A549 (cell line): ENCODE measurements at regions of chr3 and their contacts with region 1.

Region 1: DNA sequence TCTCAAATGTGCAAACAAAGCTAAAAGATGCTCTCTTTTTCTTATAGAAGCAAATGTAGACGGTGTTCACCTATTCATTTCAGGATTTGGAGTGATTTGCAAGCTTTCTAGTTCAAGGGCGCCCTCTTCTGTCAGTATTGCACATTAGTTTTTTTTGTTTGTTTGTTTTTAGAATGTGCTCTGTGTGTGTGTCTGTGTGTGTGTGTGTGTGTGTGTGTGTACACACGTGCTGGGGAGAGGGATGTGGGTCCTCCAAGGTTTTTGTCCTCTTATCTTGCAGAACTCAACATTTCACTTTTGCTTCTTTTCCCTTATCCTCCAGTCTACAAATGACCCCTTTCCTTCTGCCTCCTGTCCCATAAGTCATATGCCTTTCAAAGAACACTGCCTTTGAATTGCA is 23.5 kb downstream of the DNAH1 start:
- DNase-seq: peak; percentile 42 to 81
- ATAC-seq: peak; percentile 43 to 54; a peak in 3 of 6 replicates
- H3K4me3 ChIP-seq: no peak overlapping the region
- H3K27ac ChIP-seq: no peak overlapping the region
- H3K4me1 ChIP-seq: no peaks in the 10 kb centered on the region
- CTCF ChIP-seq: peak; percentile 81
- EP300 ChIP-seq: no peak
- POLR2A ChIP-seq: no peak
- RAD21 ChIP-seq: peak; percentile 87 to 89

Region 2: GRCh38 chr3:52144034-52144795 is 195.4 kb before region 1 on chr3:
- CTCF ChIA-PET with region 1: no interaction called
- POLR2A ChIA-PET with region 1: no interaction called
- DNase-seq: peak; percentile 69 to 84
- ATAC-seq: peak; percentile 92 to 96
- H3K4me3 ChIP-seq: no peak overlapping the region
- H3K27ac ChIP-seq: no peak overlapping the region
- H3K4me1 ChIP-seq: no peaks in the 10 kb centered on the region
- CTCF ChIP-seq: peak; percentile 71
- EP300 ChIP-seq: no peak
- POLR2A ChIP-seq: no peak
- RAD21 ChIP-seq: peak; percentile 79 to 80

Region 3: GRCh38 chr3:52220380-52221026 is 119.1 kb before region 1 on chr3:
- CTCF ChIA-PET with region 1: interaction called, 50 read pairs
- POLR2A ChIA-PET with region 1: no interaction called
- DNase-seq: peak; percentile 62 to 76
- ATAC-seq: peak; percentile 80 to 92
- H3K4me3 ChIP-seq: no peak overlapping the region
- H3K27ac ChIP-seq: no peak overlapping the region
- H3K4me1 ChIP-seq: peaks cover 8% of the 10 kb centered on the region; the same call in 2 of the 3 replicates
- CTCF ChIP-seq: peak; percentile 76
- EP300 ChIP-seq: no peak
- POLR2A ChIP-seq: no peak
- RAD21 ChIP-seq: peak; percentile 52 to 69; a peak in 4 of 5 replicates

Region 4: DNA sequence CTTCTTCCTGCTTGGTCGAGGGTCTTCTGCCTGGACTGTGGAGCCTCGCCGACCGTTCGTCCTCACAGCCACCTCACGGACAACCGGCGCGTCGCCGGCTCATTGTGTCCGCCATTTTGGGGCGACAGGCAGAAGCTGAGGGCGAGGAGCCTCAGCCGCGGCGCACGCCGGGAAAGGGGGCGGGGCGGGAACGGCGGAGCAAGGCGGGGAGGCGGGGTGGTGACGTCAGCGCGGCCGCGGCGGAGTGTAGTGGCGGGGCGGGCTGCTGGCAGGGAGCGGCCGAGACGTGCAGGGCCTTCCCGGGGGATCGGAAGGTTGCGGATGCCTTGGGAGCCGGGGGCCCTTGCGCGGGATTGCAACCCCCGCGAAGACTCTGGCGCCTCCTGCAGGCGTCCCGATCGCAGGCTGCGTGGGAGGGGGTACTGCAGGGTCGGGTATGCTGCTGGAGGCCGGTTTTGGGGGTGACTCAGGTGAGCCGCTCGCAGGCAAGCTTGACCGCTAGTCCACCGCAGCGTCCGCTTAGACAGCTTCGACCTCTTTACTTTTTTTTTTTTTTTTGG is 61.0 kb before region 1 on chr3 and contains the start of gene WDR82:
- CTCF ChIA-PET with region 1: interaction called, 20 read pairs
- POLR2A ChIA-PET with region 1: interaction called, 4 read pairs
- DNase-seq: peak; percentile 70 to 91
- ATAC-seq: peak; percentile 91 to 92
- H3K4me3 ChIP-seq: peak within 1 kb of the TSS; percentile 73
- H3K27ac ChIP-seq: peak within 1 kb of the TSS; percentile 98
- H3K4me1 ChIP-seq: peaks cover 45% of the 10 kb centered on the region
- CTCF ChIP-seq: no peak
- EP300 ChIP-seq: no peak
- POLR2A ChIP-seq: peak; percentile 88
- RAD21 ChIP-seq: no peak
- polyA plus RNA-seq, gene WDR82: 52.7 and 58.5 TPM in 2 replicates

Region 5: DNA sequence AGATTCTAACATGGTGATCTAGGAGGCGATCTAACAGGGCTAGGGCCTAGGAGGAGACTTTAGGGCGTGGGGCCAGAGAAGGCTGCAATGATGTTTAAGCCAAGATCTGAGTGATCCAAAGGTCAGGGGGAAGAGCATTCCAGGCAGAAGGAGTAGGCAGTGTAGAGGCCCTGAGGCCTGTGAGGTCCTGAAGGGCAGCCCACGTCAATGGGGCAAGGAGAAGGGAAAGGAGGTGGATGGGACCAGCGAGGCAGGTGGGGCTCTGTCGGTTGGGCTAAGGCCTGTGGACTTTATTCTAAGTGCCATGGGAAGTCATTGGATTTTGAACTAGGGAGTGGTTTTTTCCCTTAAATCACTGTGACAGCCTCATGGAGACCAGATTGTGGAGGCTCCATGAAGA is 33.7 kb before region 1 on chr3:
- CTCF ChIA-PET with region 1: interaction called, 311 read pairs
- POLR2A ChIA-PET with region 1: no interaction called
- DNase-seq: no peak
- ATAC-seq: no peak
- H3K4me3 ChIP-seq: no peak overlapping the region
- H3K27ac ChIP-seq: no peak overlapping the region
- H3K4me1 ChIP-seq: no peaks in the 10 kb centered on the region
- CTCF ChIP-seq: no peak
- EP300 ChIP-seq: no peak
- POLR2A ChIP-seq: no peak
- RAD21 ChIP-seq: no peak

Region 6: DNA sequence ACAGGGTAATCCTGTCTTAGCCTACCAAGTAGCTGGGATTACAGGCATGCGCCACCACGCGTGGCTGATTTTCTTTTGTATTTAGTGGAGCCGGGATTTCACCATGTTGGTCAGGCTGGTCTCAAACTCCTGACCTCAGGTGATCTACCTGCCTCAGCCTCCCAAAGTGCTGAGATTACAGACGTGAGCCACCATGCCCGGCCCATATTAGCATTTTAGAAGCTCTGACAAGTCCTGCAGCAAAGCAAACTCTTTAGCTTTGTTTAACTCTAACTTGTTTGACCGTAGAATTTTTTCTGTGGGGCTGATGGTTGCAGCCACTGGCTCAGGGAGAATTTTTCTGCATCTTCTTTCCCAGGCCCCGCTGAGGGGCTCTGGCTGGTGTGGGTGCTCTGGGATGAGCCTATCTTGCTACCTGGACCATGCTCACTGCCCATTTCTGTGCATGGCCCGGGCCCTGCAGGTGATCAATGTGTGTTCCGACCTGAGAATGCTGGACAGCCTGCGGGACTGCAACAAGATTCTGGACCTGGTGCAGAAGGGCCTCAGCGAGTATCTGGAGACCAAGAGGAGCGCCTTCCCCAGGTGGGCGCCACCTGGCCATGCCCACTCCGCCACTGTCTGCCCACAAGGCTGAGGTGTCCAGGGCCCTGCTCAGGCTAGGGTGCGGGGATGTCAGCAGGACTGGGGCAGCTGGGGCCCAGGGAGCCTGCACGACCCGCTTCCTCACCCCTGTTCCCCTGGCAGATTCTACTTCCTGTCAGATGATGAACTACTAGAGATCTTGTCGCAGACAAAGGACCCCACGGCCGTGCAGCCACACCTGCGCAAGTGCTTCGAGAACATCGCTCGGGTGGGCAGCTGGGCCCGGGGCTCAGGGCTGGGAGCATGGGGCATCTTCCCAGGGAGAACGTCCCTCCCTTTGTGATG is 17.8 kb after region 1 on chr3:
- CTCF ChIA-PET with region 1: interaction called, 46 read pairs
- POLR2A ChIA-PET with region 1: no interaction called
- DNase-seq: no peak
- ATAC-seq: no peak
- H3K4me3 ChIP-seq: no peak overlapping the region
- H3K27ac ChIP-seq: no peak overlapping the region
- H3K4me1 ChIP-seq: no peaks in the 10 kb centered on the region
- CTCF ChIP-seq: no peak
- EP300 ChIP-seq: no peak
- POLR2A ChIP-seq: no peak
- RAD21 ChIP-seq: no peak

Region 7: GRCh38 chr3:52444860-52445793 is 105.5 kb after region 1 on chr3 and contains the start of gene SEMA3G:
- CTCF ChIA-PET with region 1: interaction called, 11 read pairs
- POLR2A ChIA-PET with region 1: no interaction called
- DNase-seq: peak; percentile 50 to 72
- ATAC-seq: peak; percentile 79 to 93
- H3K4me3 ChIP-seq: no peak within 1 kb of the TSS
- H3K27ac ChIP-seq: peak within 1 kb of the TSS in 1 of 2 experiments; percentile 55; a peak in 2 of 6 replicates
- H3K4me1 ChIP-seq: peaks cover 6% of the 10 kb centered on the region
- CTCF ChIP-seq: no peak
- EP300 ChIP-seq: no peak
- POLR2A ChIP-seq: peak; percentile 44; the same call in 1 of the 2 replicates
- RAD21 ChIP-seq: no peak
- polyA plus RNA-seq, gene SEMA3G: 0.05 and 0.08 TPM in 2 replicates